Posterior cingulate gyrus (tissue), 11 donors: ENCODE measurements at regions of chr5 and their contacts with region 1.

Region 1: GRCh38 chr5:96807075-96807654 is 580 bp downstream of the ERAP1 start:
- DNase-seq: peak; percentile 61 to 96 (median 74)

Region 2: DNA sequence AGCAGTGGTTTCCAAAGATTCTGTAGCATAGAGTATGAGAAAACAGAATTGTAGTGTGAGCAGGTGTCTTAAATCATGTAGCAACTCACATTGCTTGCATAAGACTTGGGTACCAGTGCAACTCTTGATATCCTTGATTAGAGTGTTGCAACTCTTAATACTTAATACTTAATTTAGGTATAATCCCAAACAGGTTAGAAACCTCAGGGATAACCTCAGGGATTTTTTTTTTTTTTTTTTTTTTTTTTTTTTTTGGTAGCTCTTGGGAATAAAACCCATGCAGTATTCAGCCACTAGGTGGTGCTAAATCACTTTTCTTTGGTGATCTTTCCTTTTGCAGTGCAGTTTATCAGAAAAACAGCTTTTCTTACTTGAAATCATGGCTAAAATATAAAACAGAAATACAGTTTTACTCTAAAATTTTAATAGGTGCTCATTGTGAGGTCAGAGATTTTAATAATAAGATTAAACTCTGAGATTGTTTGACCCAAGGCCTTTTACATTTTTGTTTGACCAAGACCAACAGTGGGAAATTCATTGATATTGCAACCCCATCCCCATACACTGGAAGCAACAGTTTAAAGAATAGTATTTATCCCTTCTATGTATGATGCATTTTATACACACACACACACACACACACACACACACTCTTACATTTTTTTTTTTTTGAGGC is 54.7 kb before region 1 on chr5:
- intact Hi-C with region 1: loop called (anchors 5 kb)
- DNase-seq: peak in 1 of 10 donors; percentile 22

Region 3: DNA sequence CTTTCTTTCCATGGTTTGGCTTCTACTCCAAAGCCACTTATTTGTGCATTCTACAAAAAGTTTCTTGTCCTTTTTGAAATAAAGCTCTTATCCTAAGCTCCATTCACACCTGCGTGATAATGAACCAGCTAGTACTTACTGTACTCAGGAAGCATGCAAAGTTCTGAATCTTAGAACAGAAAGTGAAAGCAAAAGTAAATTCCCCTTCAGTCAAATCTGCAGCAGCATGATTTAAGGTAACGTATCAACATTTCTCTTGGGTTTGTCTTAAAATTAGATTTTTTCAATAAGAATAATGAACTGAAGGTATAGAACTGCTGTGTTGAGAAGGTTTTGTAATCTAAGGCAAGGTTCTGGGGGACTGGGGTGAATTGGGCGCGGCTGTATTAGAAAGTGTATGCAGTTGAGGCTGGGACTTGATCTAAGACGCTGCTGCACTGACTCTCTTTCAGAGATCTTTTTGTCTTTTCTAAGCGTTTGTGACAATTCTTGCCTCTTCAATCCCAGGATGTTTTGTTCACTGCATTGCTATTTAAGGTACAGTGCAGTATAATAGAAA is 69.2 kb after region 1 on chr5 and contains the start of gene ERAP2:
- intact Hi-C with region 1: loop called (anchors 10 kb)
- DNase-seq: peak in 1 of 10 donors; percentile 55

Region 4: GRCh38 chr5:96934708-96935558 is 127.8 kb after region 1 on chr5:
- intact Hi-C with region 1: loop called (anchors 2 kb)
- DNase-seq: peak; percentile 84 to 98 (median 92)

Region 5: GRCh38 chr5:96946381-96946780 is 139.2 kb after region 1 on chr5:
- intact Hi-C with region 1: no loop called
- DNase-seq: no peak

Region 6: DNA sequence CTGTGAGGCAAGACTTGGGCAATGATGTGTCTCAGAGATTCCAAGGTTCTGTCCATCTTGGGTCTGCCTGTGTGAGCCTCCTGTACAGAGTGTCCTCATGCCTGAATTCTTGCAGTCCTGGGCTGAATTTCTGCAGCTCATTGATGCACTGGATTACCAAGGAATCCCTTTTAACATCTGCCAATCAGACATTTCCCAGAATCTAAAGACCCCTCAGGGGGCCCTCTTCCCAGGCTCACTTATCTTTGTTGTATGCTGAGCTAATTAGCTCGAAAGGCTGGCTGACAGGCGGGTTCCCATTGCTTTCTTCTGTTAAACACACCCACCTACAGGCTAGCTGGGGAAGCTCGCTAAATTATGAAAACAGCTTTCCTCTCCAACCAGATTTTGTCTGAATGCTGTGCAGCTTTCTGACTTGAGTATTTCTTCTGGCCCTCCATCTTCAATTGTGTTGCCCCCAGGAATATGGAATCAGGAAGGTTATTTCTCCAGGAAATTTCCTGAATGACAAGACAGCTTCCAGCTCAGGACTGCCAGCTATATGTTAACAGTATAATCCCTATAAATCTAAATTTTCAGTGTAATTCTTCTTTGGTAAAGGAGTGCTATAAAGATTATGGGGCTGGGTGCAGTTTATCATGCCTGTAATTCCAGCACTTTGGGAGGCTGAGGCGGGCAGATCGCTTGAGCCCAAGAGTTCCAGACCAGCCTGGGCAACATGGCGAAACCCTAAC is 335.5 kb after region 1 on chr5 and contains the start of gene LIX1:
- intact Hi-C with region 1: loop called (anchors 10 kb)
- DNase-seq: peak in 8 of 10 donors; percentile 33 to 91 (median 50)